Ascending aorta (tissue), 2 donors: ENCODE measurements at regions of chr4 and their contacts with region 1.

Region 1: DNA sequence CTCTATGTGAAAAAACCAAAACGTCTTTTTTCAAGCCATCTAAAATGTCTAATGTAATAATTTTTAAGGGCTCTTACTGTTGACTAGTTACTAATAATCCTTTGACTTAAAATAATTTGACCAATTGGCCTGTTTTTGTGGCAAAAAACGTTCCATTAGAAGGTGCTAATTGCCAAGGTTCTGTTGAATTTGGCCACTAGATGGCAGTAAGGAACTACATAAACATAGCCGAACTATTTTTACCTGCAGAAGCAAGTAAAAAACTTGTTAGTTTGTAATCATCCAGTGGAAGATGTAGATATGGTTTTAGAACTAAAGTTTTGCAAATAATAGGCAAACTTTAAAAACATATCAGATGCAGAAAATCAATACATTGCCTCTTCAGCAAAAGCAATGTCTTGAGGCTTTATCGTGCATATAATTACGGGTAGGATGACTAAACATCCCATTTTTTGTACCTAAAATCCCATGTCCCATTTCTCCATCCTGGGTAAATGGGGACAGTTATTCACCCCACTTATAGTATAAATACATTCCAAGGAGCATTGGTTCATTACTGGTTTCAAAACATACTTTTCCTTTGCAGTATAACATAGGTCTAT is 57.6 kb downstream of the PROM1 start:
- DNase-seq: no peak
- H3K4me3 ChIP-seq: no peak overlapping the region
- H3K27ac ChIP-seq: no peak overlapping the region
- H3K4me1 ChIP-seq: peaks cover 0 to 15% of the 10 kb centered on the region in 2 donors
- H3K27me3 ChIP-seq: no peaks in the 10 kb centered on the region
- CTCF ChIP-seq: peak; percentile 72 to 85 (median 83)

Region 2: DNA sequence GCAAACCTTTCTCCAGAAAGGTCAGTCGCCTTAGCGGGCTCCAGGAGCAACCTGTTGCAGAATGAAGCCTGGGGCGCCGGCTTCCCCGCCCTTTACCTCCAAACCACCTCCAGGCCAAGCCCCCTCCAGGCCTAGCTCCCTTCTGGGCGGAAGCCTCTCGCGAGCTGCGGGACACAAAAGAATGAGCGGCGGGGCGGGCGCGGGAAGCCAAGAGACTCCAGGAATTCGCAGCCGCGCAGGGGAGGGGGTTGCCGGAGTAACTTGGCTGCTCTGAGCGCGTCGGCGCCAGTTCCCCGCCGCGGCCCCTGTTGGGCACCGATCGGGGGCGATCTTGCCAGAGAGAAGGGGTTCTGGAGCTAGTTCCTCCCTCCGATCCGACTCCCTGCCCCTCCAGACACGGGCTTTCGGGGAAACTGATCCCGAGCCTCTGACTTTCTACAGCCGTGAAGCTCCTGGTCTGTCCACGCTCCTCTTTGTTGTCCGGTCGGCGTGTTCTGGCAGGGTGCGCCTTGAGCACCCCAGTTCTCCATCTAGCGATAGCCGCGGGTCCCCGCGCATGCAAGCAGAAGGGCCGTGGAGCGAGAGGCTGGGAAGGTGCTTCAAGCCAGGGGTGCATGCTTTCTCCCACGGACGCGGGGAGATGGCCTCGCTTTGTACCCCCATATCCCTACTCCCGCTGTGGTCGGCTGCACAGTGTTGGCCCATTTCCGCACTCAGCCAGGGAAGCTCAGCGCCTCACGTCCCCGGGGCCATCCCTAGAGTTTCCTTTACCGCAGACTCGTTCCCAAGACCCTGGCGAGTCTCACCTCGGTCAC is 56.4 kb after region 1 on chr4:
- intact Hi-C with region 1: loop called (anchors 2 kb)
- DNase-seq: peak in 1 of 2 donors; percentile 77
- H3K4me3 ChIP-seq: peak overlapping the region; percentile 62 to 69
- H3K27ac ChIP-seq: peak overlapping the region in 1 of 2 donors; percentile 21
- H3K4me1 ChIP-seq: no peaks in the 10 kb centered on the region
- H3K27me3 ChIP-seq: peaks cover 4% of the 10 kb centered on the region
- CTCF ChIP-seq: no peak

Region 3: GRCh38 chr4:16264798-16265197 is 238.5 kb after region 1 on chr4:
- intact Hi-C with region 1: loop called (anchors 2 kb)
- DNase-seq: no peak
- H3K4me3 ChIP-seq: no peak overlapping the region
- H3K27ac ChIP-seq: no peak overlapping the region
- H3K4me1 ChIP-seq: peaks cover 3 to 10% of the 10 kb centered on the region in 2 donors
- H3K27me3 ChIP-seq: no peaks in the 10 kb centered on the region
- CTCF ChIP-seq: peak; percentile 38 to 72 (median 60)